ENCODE measurements at regions of chr17 and their contacts with region 1.

Region 1: GRCh38 chr17:17303010-17303846 is at the start of gene NT5M:
- DNase-seq: no peak
- H3K4me3 ChIP-seq: peak within 1 kb of the TSS; percentile 41 to 87 (median 56)
- H3K27ac ChIP-seq: peak within 1 kb of the TSS; percentile 49 to 87 (median 68)
- H3K4me1 ChIP-seq: peaks cover 8 to 40% (median 14%) of the 10 kb centered on the region in 3 donors
- H3K27me3 ChIP-seq: no peaks in the 10 kb centered on the region
- CTCF ChIP-seq: no peak
- POLR2A ChIP-seq: peak in 1 of 4 donors; percentile 58
- total RNA-seq, gene NT5M: 1.7 to 3.1 (median 2.3) TPM

Region 2: DNA sequence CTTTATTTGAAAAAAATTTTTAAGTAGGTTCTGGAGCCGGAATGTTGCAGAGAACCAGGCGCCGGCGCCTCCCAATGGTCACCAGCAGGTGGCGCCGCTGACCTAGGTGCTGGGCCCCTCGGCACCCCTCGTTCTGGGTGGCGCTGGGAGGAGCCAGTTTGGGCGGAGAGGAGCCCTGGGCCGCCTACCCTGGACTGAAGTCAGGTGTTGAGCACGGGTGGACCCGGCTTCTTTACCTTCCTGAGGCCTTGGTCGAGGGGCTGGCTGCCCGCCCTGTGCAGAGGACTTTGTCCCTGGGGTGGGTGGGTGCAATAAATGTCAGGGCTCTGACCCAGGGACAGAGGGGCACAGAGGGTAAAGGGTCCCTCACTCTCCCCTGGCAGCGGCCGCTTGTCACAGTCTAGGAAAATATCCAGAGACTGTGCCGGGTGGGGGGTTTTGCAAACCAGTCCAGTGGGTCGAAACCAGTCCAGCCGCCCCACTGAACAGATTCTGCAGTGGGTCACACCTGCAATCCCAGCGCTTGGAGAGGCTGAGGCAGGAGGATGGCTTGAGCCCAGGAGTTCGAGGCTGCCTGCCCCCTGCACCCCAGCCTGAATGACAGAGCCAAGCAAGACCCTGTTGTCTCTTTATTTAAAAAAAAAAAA is 301.2 kb before region 1 on chr17:
- intact Hi-C with region 1: loop called (anchors 10 kb)
- DNase-seq: no peak
- H3K4me3 ChIP-seq: peak overlapping the region in 1 of 4 donors; percentile 40
- H3K27ac ChIP-seq: no peak overlapping the region
- H3K4me1 ChIP-seq: peaks cover 4 to 11% (median 4%) of the 10 kb centered on the region in 3 donors
- H3K27me3 ChIP-seq: no peaks in the 10 kb centered on the region
- CTCF ChIP-seq: peak; percentile 86 to 98 (median 96)
- POLR2A ChIP-seq: no peak